ENCODE measurements at regions of chr1 and their contacts with region 1.

Region 1: GRCh38 chr1:167082511-167083027 is 7.6 kb downstream of the GPA33 start:
- DNase-seq: no peak
- H3K4me3 Mint-ChIP-seq: no peak overlapping the region
- H3K27ac Mint-ChIP-seq: no peak overlapping the region
- H3K4me1 Mint-ChIP-seq: peaks cover 13% of the 10 kb centered on the region
- H3K27me3 Mint-ChIP-seq: no peaks in the 10 kb centered on the region

Region 2: GRCh38 chr1:167105271-167106118 is 22.9 kb after region 1 on chr1:
- CTCF ChIA-PET with region 1: interaction called, 3 read pairs
- intact Hi-C with region 1: loop called (anchors 1 kb)
- DNase-seq: no peak
- H3K4me3 Mint-ChIP-seq: no peak overlapping the region
- H3K27ac Mint-ChIP-seq: peak overlapping the region; percentile 42
- H3K4me1 Mint-ChIP-seq: peaks cover 56% of the 10 kb centered on the region
- H3K27me3 Mint-ChIP-seq: no peaks in the 10 kb centered on the region

Region 3: GRCh38 chr1:167121375-167122120 is 39.0 kb after region 1 on chr1:
- CTCF ChIA-PET with region 1: interaction called, 10 read pairs
- intact Hi-C with region 1: no loop called
- DNase-seq: peak; percentile 58
- H3K4me3 Mint-ChIP-seq: peak overlapping the region; percentile 81
- H3K27ac Mint-ChIP-seq: no peak overlapping the region
- H3K4me1 Mint-ChIP-seq: peaks cover 3% of the 10 kb centered on the region
- H3K27me3 Mint-ChIP-seq: peaks cover 2% of the 10 kb centered on the region

Region 4: GRCh38 chr1:167258858-167259257 is 176.3 kb after region 1 on chr1:
- CTCF ChIA-PET with region 1: no interaction called
- intact Hi-C with region 1: no loop called
- DNase-seq: no peak
- H3K4me3 Mint-ChIP-seq: no peak overlapping the region
- H3K27ac Mint-ChIP-seq: no peak overlapping the region
- H3K4me1 Mint-ChIP-seq: peaks cover 32% of the 10 kb centered on the region
- H3K27me3 Mint-ChIP-seq: no peaks in the 10 kb centered on the region

Measured in activated naive CD4-positive, alpha-beta T cell treated with anti-CD3 and anti-CD28 coated beads for 36 hours (primary cell).